Ascending aorta (tissue), 2 donors: ENCODE measurements at regions of chr10 and their contacts with region 1.

Region 1: GRCh38 chr10:12782537-12782936 is 219.0 kb downstream of the CCDC3 start:
- DNase-seq: no peak
- H3K4me3 ChIP-seq: no peak overlapping the region
- H3K27ac ChIP-seq: no peak overlapping the region
- H3K4me1 ChIP-seq: no peaks in the 10 kb centered on the region
- H3K27me3 ChIP-seq: no peaks in the 10 kb centered on the region
- CTCF ChIP-seq: peak; percentile 60 to 66 (median 64)

Region 2: DNA sequence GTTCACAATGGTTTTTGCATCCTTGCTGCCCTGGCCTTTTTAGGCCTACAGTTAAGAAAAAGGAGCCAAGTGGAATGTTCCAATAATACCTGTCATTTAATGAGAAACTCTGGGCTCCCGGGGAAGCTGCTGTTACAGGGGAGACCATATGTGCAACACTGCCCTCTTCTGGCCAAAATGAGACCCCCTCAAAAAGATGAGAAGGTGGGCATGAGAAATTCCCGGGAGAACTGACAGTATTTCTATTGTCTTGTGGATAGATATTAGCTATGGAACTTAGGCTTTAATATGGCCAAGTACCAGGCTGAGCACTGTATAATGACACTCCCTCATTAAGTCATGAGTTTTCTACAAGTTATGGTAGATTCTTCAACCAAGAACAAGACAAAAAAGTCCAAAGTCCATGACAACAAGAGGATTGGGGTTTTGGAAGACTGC is 119.6 kb after region 1 on chr10:
- intact Hi-C with region 1: loop called (anchors 5 kb)
- DNase-seq: no peak
- H3K4me3 ChIP-seq: no peak overlapping the region
- H3K27ac ChIP-seq: peak overlapping the region; percentile 90 to 91
- H3K4me1 ChIP-seq: peaks cover 4 to 26% of the 10 kb centered on the region in 2 donors
- H3K27me3 ChIP-seq: no peaks in the 10 kb centered on the region
- CTCF ChIP-seq: peak; percentile 4 to 68 (median 56)

Region 3: GRCh38 chr10:12960334-12960898 is 177.9 kb after region 1 on chr10:
- intact Hi-C with region 1: no loop called
- DNase-seq: peak in 1 of 2 donors; percentile 73
- H3K4me3 ChIP-seq: peak overlapping the region; percentile 29 to 57
- H3K27ac ChIP-seq: peak overlapping the region; percentile 90 to 91
- H3K4me1 ChIP-seq: peaks cover 8 to 20% of the 10 kb centered on the region in 2 donors
- H3K27me3 ChIP-seq: no peaks in the 10 kb centered on the region
- CTCF ChIP-seq: no peak

Region 4: DNA sequence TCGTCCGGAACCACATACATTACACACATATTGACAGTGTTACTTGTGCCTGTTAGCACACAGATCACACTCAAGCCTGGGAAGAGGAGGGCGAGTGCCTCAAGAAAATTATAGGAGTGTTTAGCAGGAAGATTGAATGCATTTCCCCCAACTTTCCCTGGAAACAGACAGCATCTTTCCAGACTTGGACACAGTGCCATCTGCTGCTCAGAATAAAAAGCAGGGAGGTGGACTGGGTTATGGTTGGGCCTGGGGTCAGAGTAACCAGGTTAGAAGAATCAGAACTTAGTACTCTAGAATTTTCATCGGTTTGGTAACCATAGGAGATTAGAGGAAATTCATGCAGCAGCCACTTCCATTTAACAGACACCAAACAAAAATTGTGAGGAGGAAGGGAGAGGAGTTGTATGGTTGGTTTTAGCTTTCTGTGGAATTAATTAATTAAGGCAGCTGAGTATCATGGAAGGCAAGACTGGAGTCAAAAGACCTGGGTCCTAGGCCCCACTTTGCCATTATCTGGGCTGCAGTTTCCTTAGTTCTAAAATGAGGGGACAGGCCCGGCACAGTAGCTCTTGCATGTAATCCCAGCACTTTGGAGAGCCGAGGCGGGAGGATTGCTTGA is 274.0 kb after region 1 on chr10:
- intact Hi-C with region 1: loop called (anchors 1 kb)
- DNase-seq: no peak
- H3K4me3 ChIP-seq: no peak overlapping the region
- H3K27ac ChIP-seq: no peak overlapping the region
- H3K4me1 ChIP-seq: no peaks in the 10 kb centered on the region
- H3K27me3 ChIP-seq: no peaks in the 10 kb centered on the region
- CTCF ChIP-seq: peak; percentile 23 to 71 (median 34)

Region 5: GRCh38 chr10:13074561-13075451 is 292.3 kb after region 1 on chr10:
- intact Hi-C with region 1: loop called (anchors 2 kb)
- DNase-seq: peak in 1 of 2 donors; percentile 76
- H3K4me3 ChIP-seq: no peak overlapping the region
- H3K27ac ChIP-seq: no peak overlapping the region
- H3K4me1 ChIP-seq: no peaks in the 10 kb centered on the region
- H3K27me3 ChIP-seq: no peaks in the 10 kb centered on the region
- CTCF ChIP-seq: peak; percentile 62 to 87 (median 74)